ENCODE measurements at regions of chr6 and their contacts with region 1.

Region 1: GRCh38 chr6:9412951-9413559 is 977.7 kb upstream of the SLC35B3 start:
- DNase-seq: peak; percentile 75
- ATAC-seq: peak; percentile 63
- H3K4me3 ChIP-seq: no peak overlapping the region
- H3K27ac ChIP-seq: no peak overlapping the region
- H3K4me1 ChIP-seq: peaks cover 17% of the 10 kb centered on the region
- H3K27me3 ChIP-seq: no peaks in the 10 kb centered on the region
- CTCF ChIP-seq: peak; percentile 90

Region 2: DNA sequence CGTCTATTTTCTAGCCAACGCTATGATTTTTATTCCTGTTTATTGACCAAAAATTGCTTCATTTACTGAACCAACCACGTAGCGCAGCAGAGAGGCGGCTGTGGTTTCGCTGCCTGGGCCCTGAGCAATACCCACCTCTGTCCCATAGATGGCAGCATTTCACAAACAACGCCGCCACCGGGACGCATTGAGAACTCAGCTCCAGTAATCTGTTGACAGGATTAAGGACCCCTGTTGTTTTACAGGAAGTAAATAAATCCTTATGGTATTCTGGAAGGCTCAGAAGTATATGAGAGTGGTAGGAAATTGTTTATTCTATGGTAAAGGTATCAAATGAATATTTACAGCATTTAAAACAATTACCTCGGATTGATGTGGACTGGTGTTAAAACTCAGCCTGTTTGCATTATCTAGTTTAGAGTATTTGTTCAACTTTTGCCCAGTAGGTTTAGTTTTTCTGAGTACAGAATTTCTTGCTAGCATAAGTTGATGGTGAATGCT is 429.8 kb before region 1 on chr6:
- CTCF ChIA-PET with region 1: no interaction called
- POLR2A ChIA-PET with region 1: no interaction called
- intact Hi-C with region 1: loop called (anchors 1 kb)
- DNase-seq: peak; percentile 78
- ATAC-seq: peak; percentile 98
- H3K4me3 ChIP-seq: no peak overlapping the region
- H3K27ac ChIP-seq: no peak overlapping the region
- H3K4me1 ChIP-seq: no peaks in the 10 kb centered on the region; the same call in 1 of the 2 replicates
- H3K27me3 ChIP-seq: peaks cover 21% of the 10 kb centered on the region; the same call in 1 of the 2 replicates
- CTCF ChIP-seq: peak; percentile 96

Region 3: DNA sequence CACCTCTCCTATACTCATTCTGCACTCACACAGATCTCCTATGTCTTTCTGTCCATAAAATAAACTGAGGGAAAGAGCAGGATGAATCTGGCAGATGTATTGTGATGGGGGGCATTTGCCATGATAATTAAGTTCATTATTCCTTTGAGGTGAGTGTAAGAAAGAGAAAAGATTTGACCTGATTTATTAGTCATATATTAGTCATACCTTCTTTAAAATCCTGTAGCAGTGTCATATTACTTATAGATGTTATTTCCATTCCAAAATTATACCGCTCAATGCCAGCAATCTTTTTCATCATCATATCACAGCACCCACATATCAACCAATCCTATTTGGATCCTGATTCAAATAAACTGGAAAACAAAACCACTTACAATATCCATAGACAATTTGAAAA is 244.4 kb before region 1 on chr6:
- CTCF ChIA-PET with region 1: no interaction called
- POLR2A ChIA-PET with region 1: no interaction called
- intact Hi-C with region 1: no loop called
- DNase-seq: peak; percentile 33
- ATAC-seq: peak; percentile 31
- H3K4me3 ChIP-seq: no peak overlapping the region
- H3K27ac ChIP-seq: no peak overlapping the region
- H3K4me1 ChIP-seq: peaks cover 8% of the 10 kb centered on the region; the same call in 1 of the 2 replicates
- H3K27me3 ChIP-seq: no peaks in the 10 kb centered on the region
- CTCF ChIP-seq: no peak

Region 4: GRCh38 chr6:9334979-9335378 is 78.1 kb before region 1 on chr6:
- CTCF ChIA-PET with region 1: no interaction called
- POLR2A ChIA-PET with region 1: no interaction called
- intact Hi-C with region 1: no loop called
- DNase-seq: no peak
- ATAC-seq: no peak
- H3K4me3 ChIP-seq: no peak overlapping the region
- H3K27ac ChIP-seq: no peak overlapping the region
- H3K4me1 ChIP-seq: no peaks in the 10 kb centered on the region
- H3K27me3 ChIP-seq: peaks cover 18% of the 10 kb centered on the region
- CTCF ChIP-seq: no peak

Measured in PC-3 (cell line).